ENCODE measurements at regions of chr11 and their contacts with region 1.

Region 1: DNA sequence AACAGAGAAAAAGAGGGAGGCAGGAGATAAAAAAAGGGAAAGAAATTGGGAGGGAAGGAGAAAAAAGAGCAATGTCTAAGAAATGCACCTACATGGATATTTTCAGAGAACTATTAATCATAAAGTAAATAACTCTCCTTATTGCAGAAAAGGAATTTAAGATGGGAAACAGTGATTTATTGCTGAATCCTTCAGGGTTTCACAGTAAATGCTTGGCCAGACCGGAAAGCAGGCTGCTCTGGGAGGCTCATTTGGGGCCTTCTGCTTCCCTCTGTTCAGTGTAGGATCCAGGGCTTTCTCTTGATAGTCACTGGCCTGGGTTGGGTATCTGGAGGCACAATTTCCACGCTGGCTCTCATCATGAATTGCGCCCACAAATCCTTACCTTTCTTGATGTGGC is 324.3 kb upstream of the SORL1-AS1 start:
- DNase-seq: no peak
- ATAC-seq: no peak
- H3K4me3 ChIP-seq: no peak overlapping the region
- H3K27ac ChIP-seq: no peak overlapping the region
- H3K4me1 ChIP-seq: no peaks in the 10 kb centered on the region
- H3K27me3 ChIP-seq: no peaks in the 10 kb centered on the region
- CTCF ChIP-seq: no peak

Region 2: GRCh38 chr11:121688055-121688491 is 89.0 kb before region 1 on chr11:
- intact Hi-C with region 1: no loop called
- DNase-seq: no peak
- ATAC-seq: peak in 3 of 4 donors; percentile 33 to 69 (median 48)
- H3K4me3 ChIP-seq: no peak overlapping the region
- H3K27ac ChIP-seq: no peak overlapping the region
- H3K4me1 ChIP-seq: peaks cover 11% of the 10 kb centered on the region
- H3K27me3 ChIP-seq: no peaks in the 10 kb centered on the region
- CTCF ChIP-seq: no peak

Region 3: DNA sequence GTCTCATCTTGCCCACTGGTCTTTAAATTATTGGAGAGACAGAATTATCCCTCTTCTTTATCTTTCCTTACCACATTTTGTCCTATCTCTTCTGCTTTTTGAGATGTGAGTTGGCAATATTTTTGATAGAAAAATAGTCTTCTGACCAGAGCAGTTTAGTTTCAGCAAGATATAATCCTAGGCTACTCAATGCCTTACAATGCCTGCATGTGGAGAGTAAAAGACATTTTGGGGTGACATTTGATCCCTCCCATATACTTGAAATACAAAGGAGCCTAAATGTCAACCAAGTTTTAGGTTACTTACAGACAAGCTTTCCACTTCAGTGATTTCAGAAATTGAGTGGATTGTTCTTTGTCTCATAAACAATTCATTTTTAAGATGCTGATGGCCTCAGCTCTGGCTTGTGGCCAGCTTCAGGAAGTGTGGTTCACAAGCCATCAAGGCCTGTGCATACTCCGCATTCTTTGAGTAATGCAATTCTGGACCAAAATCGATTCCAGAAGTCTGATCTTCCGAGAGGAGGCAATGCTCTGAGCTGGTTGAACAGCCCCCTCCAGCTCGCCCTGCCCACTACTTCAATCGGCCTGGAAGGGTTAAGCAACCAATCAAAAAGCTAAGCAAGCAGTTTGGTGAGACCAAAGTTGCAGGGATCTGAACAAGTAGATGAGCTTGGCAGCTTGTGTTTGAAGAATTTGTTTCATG is 64.6 kb after region 1 on chr11:
- intact Hi-C with region 1: loop called in 1 of 2 experiments (anchors 10 kb)
- DNase-seq: no peak
- ATAC-seq: no peak
- H3K4me3 ChIP-seq: no peak overlapping the region
- H3K27ac ChIP-seq: no peak overlapping the region
- H3K4me1 ChIP-seq: no peaks in the 10 kb centered on the region
- H3K27me3 ChIP-seq: no peaks in the 10 kb centered on the region
- CTCF ChIP-seq: no peak

Region 4: GRCh38 chr11:122920579-122920978 is 1143.5 kb after region 1 on chr11:
- intact Hi-C with region 1: loop called in 1 of 2 experiments (anchors 10 kb)
- DNase-seq: no peak
- ATAC-seq: no peak
- H3K4me3 ChIP-seq: no peak overlapping the region
- H3K27ac ChIP-seq: no peak overlapping the region
- H3K4me1 ChIP-seq: no peaks in the 10 kb centered on the region
- H3K27me3 ChIP-seq: peaks cover 0 to 3% (median 0%) of the 10 kb centered on the region in 3 donors
- CTCF ChIP-seq: no peak